PC-3 (cell line): ENCODE measurements at regions of chr16 and their contacts with region 1.

Region 1: GRCh38 chr16:72530444-72530843 is 358.5 kb upstream of the PMFBP1 start:
- DNase-seq: peak; percentile 85
- ATAC-seq: peak; percentile 80
- H3K4me3 ChIP-seq: no peak overlapping the region
- H3K27ac ChIP-seq: 0 out of 2 replicates have a peak overlapping the region, but pooled peaks have one; percentile 9
- H3K4me1 ChIP-seq: 0 out of 2 replicates have a peak, but pooled peaks cover 5% of the 10 kb centered on the region
- H3K27me3 ChIP-seq: no peaks in the 10 kb centered on the region
- CTCF ChIP-seq: peak; percentile 53

Region 2: GRCh38 chr16:72664509-72665225 is 134.2 kb after region 1 on chr16:
- CTCF ChIA-PET with region 1: no interaction called
- POLR2A ChIA-PET with region 1: no interaction called
- intact Hi-C with region 1: loop called (anchors 1 kb)
- DNase-seq: peak; percentile 94
- ATAC-seq: peak; percentile 100
- H3K4me3 ChIP-seq: peak overlapping the region; percentile 91
- H3K27ac ChIP-seq: peak overlapping the region; percentile 54
- H3K4me1 ChIP-seq: peaks cover 4% of the 10 kb centered on the region; the same call in 1 of the 2 replicates
- H3K27me3 ChIP-seq: no peaks in the 10 kb centered on the region
- CTCF ChIP-seq: no peak

Region 3: DNA sequence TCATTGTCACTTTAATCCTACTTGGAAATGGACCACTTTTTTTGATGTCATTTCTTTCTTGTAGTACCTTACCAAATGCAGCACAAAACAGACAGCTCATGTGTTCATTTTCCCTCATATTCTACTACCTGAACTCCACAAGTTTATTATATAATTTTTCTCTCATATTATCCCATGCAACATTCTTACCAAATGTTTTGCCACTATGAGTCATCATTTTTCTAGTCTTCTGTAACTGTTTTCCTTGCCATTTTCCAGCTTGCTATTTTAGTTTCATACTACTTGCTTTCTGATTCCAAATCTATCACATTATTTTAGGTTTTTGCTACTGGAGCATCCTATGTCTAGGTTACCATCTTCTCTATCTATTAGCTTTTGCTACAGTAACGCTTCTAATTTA is 184.8 kb after region 1 on chr16:
- CTCF ChIA-PET with region 1: no interaction called
- POLR2A ChIA-PET with region 1: no interaction called
- intact Hi-C with region 1: no loop called
- DNase-seq: peak; percentile 9
- ATAC-seq: no peak
- H3K4me3 ChIP-seq: no peak overlapping the region
- H3K27ac ChIP-seq: no peak overlapping the region
- H3K4me1 ChIP-seq: no peaks in the 10 kb centered on the region
- H3K27me3 ChIP-seq: no peaks in the 10 kb centered on the region
- CTCF ChIP-seq: no peak